ENCODE measurements at regions of chr14 and their contacts with region 1.

Region 1: DNA sequence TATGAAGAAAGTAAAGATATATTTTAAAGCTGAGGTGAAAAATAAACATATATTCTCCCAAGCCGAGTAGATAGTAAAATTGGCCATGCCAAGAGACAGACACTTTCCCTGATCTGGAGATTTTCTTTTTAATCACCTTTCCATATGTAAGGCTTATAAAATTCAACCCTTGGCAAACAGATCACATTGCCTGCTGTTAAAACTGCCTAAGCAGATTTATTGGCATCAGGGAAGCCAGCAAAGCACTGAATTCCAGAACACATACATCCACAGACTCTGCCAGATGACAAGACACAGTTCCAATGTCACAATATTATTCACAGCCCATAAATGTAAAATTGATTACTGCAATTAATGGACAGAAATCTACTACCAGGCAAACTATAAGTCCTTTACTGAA is 78.2 kb upstream of the GARIN2 start:
- DNase-seq: no peak
- H3K4me3 ChIP-seq: no peak overlapping the region
- H3K27ac ChIP-seq: no peak overlapping the region
- H3K4me1 ChIP-seq: no peaks in the 10 kb centered on the region
- CTCF ChIP-seq: no peak

Region 2: GRCh38 chr14:66359500-66359899 is 751.5 kb before region 1 on chr14:
- CTCF ChIA-PET with region 1: no interaction called
- POLR2A ChIA-PET with region 1: no interaction called
- intact Hi-C with region 1: loop called (anchors 10 kb)
- DNase-seq: peak; percentile 69
- H3K4me3 ChIP-seq: no peak overlapping the region
- H3K27ac ChIP-seq: no peak overlapping the region
- H3K4me1 ChIP-seq: no peaks in the 10 kb centered on the region
- CTCF ChIP-seq: peak; percentile 85

Region 3: GRCh38 chr14:66495218-66496098 is 615.6 kb before region 1 on chr14:
- CTCF ChIA-PET with region 1: no interaction called
- POLR2A ChIA-PET with region 1: no interaction called
- intact Hi-C with region 1: loop called (anchors 10 kb)
- DNase-seq: peak; percentile 28
- H3K4me3 ChIP-seq: no peak overlapping the region
- H3K27ac ChIP-seq: no peak overlapping the region
- H3K4me1 ChIP-seq: no peaks in the 10 kb centered on the region
- CTCF ChIP-seq: peak; percentile 89

Region 4: GRCh38 chr14:66610154-66610563 is 500.9 kb before region 1 on chr14:
- CTCF ChIA-PET with region 1: no interaction called
- POLR2A ChIA-PET with region 1: no interaction called
- intact Hi-C with region 1: loop called (anchors 5 kb)
- DNase-seq: peak; percentile 30
- H3K4me3 ChIP-seq: no peak overlapping the region
- H3K27ac ChIP-seq: no peak overlapping the region
- H3K4me1 ChIP-seq: no peaks in the 10 kb centered on the region
- CTCF ChIP-seq: peak; percentile 80

Measured in OCI-LY7 (cell line).